Activated CD4-positive, alpha-beta T cell treated with anti-CD3 and anti-CD28 coated beads for 36 hours (primary cell): ENCODE measurements at regions of chr17 and their contacts with region 1.

Region 1: DNA sequence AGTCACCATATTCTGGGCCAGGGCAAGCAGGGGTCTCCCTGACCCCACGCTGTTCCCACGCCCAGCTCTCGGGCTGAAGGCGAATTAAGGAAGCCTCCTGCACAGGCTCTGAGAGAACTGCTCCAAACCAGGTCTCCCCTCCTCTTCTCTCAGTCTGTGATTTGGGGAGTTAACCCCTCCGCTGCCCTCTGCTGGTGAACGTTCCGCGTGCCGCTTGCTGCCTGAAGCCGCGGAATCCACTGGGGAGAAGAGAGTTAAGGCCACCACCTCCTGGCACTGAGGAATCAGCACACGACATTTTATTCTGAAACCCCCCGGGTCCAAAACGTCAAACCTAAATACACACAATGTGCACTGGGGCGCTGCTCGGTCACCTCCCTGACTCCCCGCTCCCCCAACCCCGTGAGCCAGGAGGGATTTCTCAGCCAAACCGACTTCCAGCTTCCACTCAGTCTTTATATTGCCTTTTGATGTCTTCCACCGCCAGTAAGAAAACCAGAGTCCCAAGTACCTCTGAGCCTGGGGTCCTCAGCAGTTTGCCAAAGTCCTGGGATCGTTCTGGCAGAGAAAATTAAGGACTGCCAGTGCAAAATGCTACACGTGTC is 54.4 kb upstream of the RCVRN start:
- DNase-seq: peak; percentile 71
- ATAC-seq: no peak
- H3K4me3 Mint-ChIP-seq: no peak overlapping the region
- H3K27ac Mint-ChIP-seq: no peak overlapping the region
- H3K4me1 Mint-ChIP-seq: no peaks in the 10 kb centered on the region
- H3K27me3 Mint-ChIP-seq: peaks cover 4% of the 10 kb centered on the region

Region 2: GRCh38 chr17:9924735-9925191 is 34.7 kb before region 1 on chr17:
- CTCF ChIA-PET with region 1: interaction called, 3 read pairs
- POLR2A ChIA-PET with region 1: no interaction called
- intact Hi-C with region 1: loop called in 1 of 2 experiments (anchors 1 kb)
- DNase-seq: no peak
- ATAC-seq: peak; percentile 58
- H3K4me3 Mint-ChIP-seq: no peak overlapping the region
- H3K27ac Mint-ChIP-seq: no peak overlapping the region
- H3K4me1 Mint-ChIP-seq: no peaks in the 10 kb centered on the region
- H3K27me3 Mint-ChIP-seq: no peaks in the 10 kb centered on the region

Region 3: GRCh38 chr17:9937241-9937761 is 22.2 kb before region 1 on chr17:
- CTCF ChIA-PET with region 1: no interaction called
- POLR2A ChIA-PET with region 1: no interaction called
- intact Hi-C with region 1: no loop called
- DNase-seq: no peak
- ATAC-seq: no peak
- H3K4me3 Mint-ChIP-seq: no peak overlapping the region
- H3K27ac Mint-ChIP-seq: no peak overlapping the region
- H3K4me1 Mint-ChIP-seq: no peaks in the 10 kb centered on the region
- H3K27me3 Mint-ChIP-seq: no peaks in the 10 kb centered on the region

Region 4: GRCh38 chr17:10357768-10358167 is 398.3 kb after region 1 on chr17:
- CTCF ChIA-PET with region 1: no interaction called
- POLR2A ChIA-PET with region 1: no interaction called
- intact Hi-C with region 1: loop called in 1 of 2 experiments (anchors 2 kb)
- DNase-seq: peak; percentile 53
- ATAC-seq: no peak
- H3K4me3 Mint-ChIP-seq: no peak overlapping the region
- H3K27ac Mint-ChIP-seq: no peak overlapping the region
- H3K4me1 Mint-ChIP-seq: no peaks in the 10 kb centered on the region
- H3K27me3 Mint-ChIP-seq: peaks cover 1% of the 10 kb centered on the region